IMR-90 (cell line): ENCODE measurements at regions of chr2 and their contacts with region 1.

Region 1: DNA sequence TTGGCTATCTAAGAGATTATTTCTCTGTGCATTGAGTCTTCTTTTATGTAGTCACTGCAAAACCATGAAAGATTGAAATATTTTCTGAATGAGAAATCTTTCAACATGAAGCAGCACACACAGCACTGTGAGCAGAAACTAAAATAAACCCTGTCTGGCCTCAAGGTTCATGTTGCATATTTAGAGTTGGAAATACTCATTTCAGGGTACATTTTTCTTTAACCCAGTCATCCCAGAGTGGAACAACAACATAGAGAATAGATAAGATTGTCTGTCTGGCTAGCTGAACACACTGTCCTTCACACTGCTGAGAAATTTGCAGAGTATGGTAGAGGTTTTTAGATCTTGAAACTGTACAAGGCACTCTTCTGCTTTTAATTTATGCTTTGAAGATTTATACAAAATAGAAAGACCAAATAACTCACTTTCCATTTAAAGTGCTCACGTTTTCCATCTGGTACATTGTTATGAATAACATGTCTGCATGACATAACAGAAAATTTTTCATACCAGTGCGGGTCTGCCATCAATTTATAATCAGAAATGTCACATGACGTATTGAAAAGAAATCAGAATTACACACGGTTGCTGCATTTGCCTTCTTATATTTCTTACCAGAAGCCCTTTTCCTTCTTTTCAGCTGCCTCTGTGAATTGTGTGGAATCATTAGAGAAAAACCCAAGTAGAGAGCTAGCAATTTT is 25.0 kb upstream of the FN1 start:
- DNase-seq: peak; percentile 97
- ATAC-seq: peak; percentile 94
- H3K4me3 ChIP-seq: no peak overlapping the region
- H3K27ac ChIP-seq: peak overlapping the region; percentile 63; the same call in 1 of the 2 replicates
- H3K4me1 ChIP-seq: peaks cover 13% of the 10 kb centered on the region
- H3K27me3 ChIP-seq: no peaks in the 10 kb centered on the region
- CTCF ChIP-seq: no peak
- POLR2A ChIP-seq: peak; percentile 35; the same call in 1 of the 2 replicates
- RAD21 ChIP-seq: peak; percentile 36

Region 2: GRCh38 chr2:215528555-215528954 is 67.7 kb after region 1 on chr2:
- CTCF ChIA-PET with region 1: no interaction called
- POLR2A ChIA-PET with region 1: no interaction called
- dilution Hi-C with region 1: no loop called
- in situ Hi-C with region 1: no loop called
- intact Hi-C with region 1: loop called (anchors 2 kb)
- DNase-seq: peak; percentile 99
- ATAC-seq: peak; percentile 70
- H3K4me3 ChIP-seq: no peak overlapping the region
- H3K27ac ChIP-seq: peak overlapping the region; percentile 94; the same call in 1 of the 2 replicates
- H3K4me1 ChIP-seq: peaks cover 17% of the 10 kb centered on the region
- H3K27me3 ChIP-seq: no peaks in the 10 kb centered on the region
- CTCF ChIP-seq: no peak
- POLR2A ChIP-seq: no peak
- RAD21 ChIP-seq: peak; percentile 50

Region 3: DNA sequence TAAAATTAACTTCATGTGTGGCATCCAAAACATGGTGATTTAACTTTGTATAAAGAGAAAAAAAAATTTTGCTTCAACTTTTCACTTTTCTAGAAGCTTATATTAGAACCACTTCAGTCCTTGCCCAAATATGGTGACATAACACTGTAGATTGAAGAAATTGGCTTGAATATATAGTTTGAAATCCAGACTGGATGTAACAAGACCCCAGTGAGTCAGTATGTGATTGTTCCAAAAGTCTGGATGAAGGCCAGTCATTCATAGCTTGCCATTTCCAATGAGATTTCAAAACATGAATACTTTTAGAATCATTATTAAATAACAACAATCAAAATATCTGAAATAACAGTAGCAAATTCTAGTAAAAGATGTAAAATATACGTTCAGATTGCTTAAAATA is 79.8 kb after region 1 on chr2:
- CTCF ChIA-PET with region 1: no interaction called
- POLR2A ChIA-PET with region 1: no interaction called
- dilution Hi-C with region 1: no loop called
- in situ Hi-C with region 1: no loop called
- intact Hi-C with region 1: loop called (anchors 2 kb)
- DNase-seq: peak; percentile 97
- ATAC-seq: peak; percentile 73
- H3K4me3 ChIP-seq: no peak overlapping the region
- H3K27ac ChIP-seq: peak overlapping the region; percentile 56; the same call in 1 of the 2 replicates
- H3K4me1 ChIP-seq: peaks cover 11% of the 10 kb centered on the region
- H3K27me3 ChIP-seq: no peaks in the 10 kb centered on the region
- CTCF ChIP-seq: no peak
- POLR2A ChIP-seq: no peak
- RAD21 ChIP-seq: no peak

Region 4: DNA sequence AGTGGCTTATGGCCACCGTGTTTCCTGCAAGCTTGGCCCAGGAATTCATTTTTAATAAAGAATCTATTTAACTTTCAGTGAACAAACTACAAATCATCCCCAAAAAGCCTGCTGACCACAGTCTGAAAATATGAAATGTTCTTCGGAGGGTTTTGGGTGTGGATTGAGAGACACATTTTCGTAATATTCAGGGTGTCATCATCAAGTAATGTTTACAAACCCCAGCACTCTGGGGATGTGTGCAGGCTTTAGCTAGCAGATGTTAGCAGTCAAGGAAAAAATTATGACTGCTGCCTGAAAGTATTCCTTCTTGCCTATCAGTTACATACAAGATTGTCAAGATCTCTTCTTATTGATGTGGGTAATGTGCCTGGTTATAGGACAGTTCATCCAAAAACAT is 119.0 kb after region 1 on chr2:
- CTCF ChIA-PET with region 1: no interaction called
- POLR2A ChIA-PET with region 1: no interaction called
- dilution Hi-C with region 1: no loop called
- in situ Hi-C with region 1: no loop called
- intact Hi-C with region 1: no loop called
- DNase-seq: peak; percentile 90
- ATAC-seq: peak; percentile 84
- H3K4me3 ChIP-seq: no peak overlapping the region
- H3K27ac ChIP-seq: no peak overlapping the region
- H3K4me1 ChIP-seq: peaks cover 3% of the 10 kb centered on the region
- H3K27me3 ChIP-seq: no peaks in the 10 kb centered on the region
- CTCF ChIP-seq: no peak
- POLR2A ChIP-seq: no peak
- RAD21 ChIP-seq: no peak

Region 5: GRCh38 chr2:215624423-215624829 is 163.6 kb after region 1 on chr2:
- CTCF ChIA-PET with region 1: interaction called, 3 read pairs
- POLR2A ChIA-PET with region 1: no interaction called
- dilution Hi-C with region 1: no loop called
- in situ Hi-C with region 1: no loop called
- intact Hi-C with region 1: loop called (anchors 5 kb)
- DNase-seq: peak; percentile 100
- ATAC-seq: peak; percentile 95
- H3K4me3 ChIP-seq: no peak overlapping the region
- H3K27ac ChIP-seq: peak overlapping the region; percentile 92; the same call in 1 of the 2 replicates
- H3K4me1 ChIP-seq: peaks cover 11% of the 10 kb centered on the region
- H3K27me3 ChIP-seq: no peaks in the 10 kb centered on the region
- CTCF ChIP-seq: no peak
- POLR2A ChIP-seq: 0 out of 2 replicates have a peak, but pooled peaks have one; percentile 10
- RAD21 ChIP-seq: peak; percentile 30

Region 6: DNA sequence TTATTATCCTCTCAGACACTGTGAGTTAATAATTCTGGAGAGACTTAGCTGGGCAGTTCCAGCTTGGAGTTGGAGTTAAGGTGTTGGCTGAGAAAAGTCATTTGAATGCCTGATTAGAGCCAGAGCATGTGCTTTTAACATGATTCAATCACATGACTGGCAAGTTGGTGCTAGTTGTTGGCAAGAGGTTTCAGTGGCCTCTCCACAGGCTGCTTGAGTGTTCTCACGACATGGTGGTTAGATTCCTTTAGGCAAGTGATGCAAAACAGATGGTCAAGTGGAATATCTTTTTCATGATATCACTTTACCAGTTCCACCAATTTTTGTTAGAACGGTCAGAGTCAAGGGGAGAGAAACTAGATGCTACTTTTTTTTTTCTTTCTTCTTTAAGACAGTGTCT is 237.7 kb after region 1 on chr2:
- CTCF ChIA-PET with region 1: no interaction called
- POLR2A ChIA-PET with region 1: no interaction called
- dilution Hi-C with region 1: no loop called
- in situ Hi-C with region 1: no loop called
- intact Hi-C with region 1: loop called (anchors 2 kb)
- DNase-seq: peak; percentile 96
- ATAC-seq: peak; percentile 25
- H3K4me3 ChIP-seq: no peak overlapping the region
- H3K27ac ChIP-seq: peak overlapping the region; percentile 80; the same call in 1 of the 2 replicates
- H3K4me1 ChIP-seq: peaks cover 12% of the 10 kb centered on the region
- H3K27me3 ChIP-seq: no peaks in the 10 kb centered on the region
- CTCF ChIP-seq: no peak
- POLR2A ChIP-seq: no peak
- RAD21 ChIP-seq: no peak